ENCODE measurements at regions of chr2 and their contacts with region 1.

Region 1: GRCh38 chr2:47344890-47345589 is 57.9 kb upstream of the MSH2 start:
- DNase-seq: peak; percentile 95
- ATAC-seq: peak; percentile 98
- H3K4me3 Mint-ChIP-seq: peak overlapping the region; percentile 86
- H3K27ac Mint-ChIP-seq: peak overlapping the region; percentile 100
- H3K4me1 Mint-ChIP-seq: peaks cover 47% of the 10 kb centered on the region
- H3K27me3 Mint-ChIP-seq: no peaks in the 10 kb centered on the region
- CTCF ChIP-seq: no peak

Region 2: DNA sequence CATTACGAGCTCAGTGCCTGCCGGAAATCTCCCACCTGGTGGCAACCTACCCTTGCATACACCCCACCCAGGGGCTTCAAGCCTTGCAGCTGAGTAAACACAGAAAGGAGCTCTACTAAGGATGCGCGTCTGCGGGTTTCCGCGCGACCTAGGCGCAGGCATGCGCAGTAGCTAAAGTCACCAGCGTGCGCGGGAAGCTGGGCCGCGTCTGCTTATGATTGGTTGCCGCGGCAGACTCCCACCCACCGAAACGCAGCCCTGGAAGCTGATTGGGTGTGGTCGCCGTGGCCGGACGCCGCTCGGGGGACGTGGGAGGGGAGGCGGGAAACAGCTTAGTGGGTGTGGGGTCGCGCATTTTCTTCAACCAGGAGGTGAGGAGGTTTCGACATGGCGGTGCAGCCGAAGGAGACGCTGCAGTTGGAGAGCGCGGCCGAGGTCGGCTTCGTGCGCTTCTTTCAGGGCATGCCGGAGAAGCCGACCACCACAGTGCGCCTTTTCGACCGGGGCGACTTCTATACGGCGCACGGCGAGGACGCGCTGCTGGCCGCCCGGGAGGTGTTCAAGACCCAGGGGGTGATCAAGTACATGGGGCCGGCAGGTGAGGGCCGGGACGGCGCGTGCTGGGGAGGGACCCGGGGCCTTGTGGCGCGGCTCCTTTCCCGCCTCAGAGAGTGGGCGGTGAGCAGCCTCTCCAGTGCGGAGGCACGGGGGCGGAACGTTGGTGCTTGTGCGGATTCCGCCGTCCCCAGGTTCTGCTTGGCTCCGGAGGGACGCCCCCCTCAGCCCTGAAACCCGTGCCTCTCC is 58.0 kb after region 1 on chr2 and contains the start of gene MSH2:
- CTCF ChIA-PET with region 1: interaction called, 10 read pairs
- POLR2A ChIA-PET with region 1: interaction called, 17 read pairs
- DNase-seq: peak; percentile 95
- ATAC-seq: peak; percentile 91
- H3K4me3 Mint-ChIP-seq: peak within 1 kb of the TSS; percentile 91
- H3K27ac Mint-ChIP-seq: peak within 1 kb of the TSS; percentile 100
- H3K4me1 Mint-ChIP-seq: peaks cover 44% of the 10 kb centered on the region
- H3K27me3 Mint-ChIP-seq: no peaks in the 10 kb centered on the region
- CTCF ChIP-seq: no peak
- total RNA-seq, gene MSH2: 207 to 244 TPM (median 209 TPM) in 3 replicates

Measured in WTC11 (cell line).